ENCODE measurements at regions of chr17 and their contacts with region 1.

Region 1: DNA sequence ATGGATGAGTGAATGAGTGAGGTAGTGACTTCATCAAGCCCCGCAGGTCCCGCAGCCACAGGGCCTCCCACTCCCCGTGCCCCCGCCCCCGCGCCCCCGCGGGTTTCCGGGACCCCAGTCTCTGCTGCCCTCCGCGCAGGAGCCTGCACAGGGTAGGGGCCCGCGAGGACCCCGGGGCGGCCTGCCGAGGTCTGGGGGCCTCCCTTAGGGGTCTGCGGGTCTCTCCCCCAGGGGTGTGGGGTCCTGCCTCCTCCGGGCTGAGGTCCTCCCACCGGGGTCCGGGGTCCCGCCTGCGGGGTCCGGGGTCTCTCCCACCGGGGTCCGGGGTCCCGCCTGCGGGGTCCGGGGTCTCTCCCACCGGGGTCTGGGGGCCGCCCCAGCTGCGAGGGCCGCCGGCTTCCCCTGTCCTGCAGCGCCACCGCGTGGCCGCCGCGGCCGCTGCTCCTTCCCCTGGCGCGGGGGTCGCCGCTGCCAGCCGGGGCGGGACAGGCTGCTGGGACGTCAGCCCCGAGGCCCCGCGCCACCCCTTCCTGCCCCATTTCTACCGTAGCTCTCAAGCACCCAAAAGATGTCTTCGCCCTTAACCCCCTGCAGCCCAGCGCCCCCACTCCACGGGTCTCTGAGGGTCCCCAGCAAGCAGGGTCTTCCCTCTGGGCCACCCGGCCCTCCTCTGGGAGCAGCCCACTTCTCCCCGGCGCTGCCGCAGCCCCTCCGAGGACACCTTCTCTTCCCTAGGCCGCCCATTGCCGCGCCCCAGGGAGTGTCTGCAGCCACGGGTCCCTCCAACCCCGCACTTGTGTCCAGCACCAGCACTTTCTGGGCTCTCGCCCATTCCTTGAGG is 10.4 kb upstream of the CHMP6 start:
- DNase-seq: no peak
- H3K4me3 ChIP-seq: peak overlapping the region in 1 of 2 donors; percentile 16
- H3K27ac ChIP-seq: no peak overlapping the region
- H3K4me1 ChIP-seq: peaks cover 0 to 28% (median 12%) of the 10 kb centered on the region in 4 donors
- H3K27me3 ChIP-seq: peaks cover 0 to 5% of the 10 kb centered on the region in 2 donors
- CTCF ChIP-seq: peak; percentile 77 to 78

Region 2: GRCh38 chr17:80426681-80427326 is 554.5 kb before region 1 on chr17:
- intact Hi-C with region 1: loop called (anchors 2 kb)
- DNase-seq: peak; percentile 61 to 77
- H3K4me3 ChIP-seq: no peak overlapping the region
- H3K27ac ChIP-seq: no peak overlapping the region
- H3K4me1 ChIP-seq: peaks cover 0 to 14% (median 4%) of the 10 kb centered on the region in 4 donors
- H3K27me3 ChIP-seq: no peaks in the 10 kb centered on the region
- CTCF ChIP-seq: peak; percentile 97 to 98

Region 3: GRCh38 chr17:80432961-80433550 is 548.2 kb before region 1 on chr17:
- intact Hi-C with region 1: loop called (anchors 2 kb)
- DNase-seq: no peak
- H3K4me3 ChIP-seq: no peak overlapping the region
- H3K27ac ChIP-seq: no peak overlapping the region
- H3K4me1 ChIP-seq: no peaks in the 10 kb centered on the region
- H3K27me3 ChIP-seq: no peaks in the 10 kb centered on the region
- CTCF ChIP-seq: no peak

Region 4: DNA sequence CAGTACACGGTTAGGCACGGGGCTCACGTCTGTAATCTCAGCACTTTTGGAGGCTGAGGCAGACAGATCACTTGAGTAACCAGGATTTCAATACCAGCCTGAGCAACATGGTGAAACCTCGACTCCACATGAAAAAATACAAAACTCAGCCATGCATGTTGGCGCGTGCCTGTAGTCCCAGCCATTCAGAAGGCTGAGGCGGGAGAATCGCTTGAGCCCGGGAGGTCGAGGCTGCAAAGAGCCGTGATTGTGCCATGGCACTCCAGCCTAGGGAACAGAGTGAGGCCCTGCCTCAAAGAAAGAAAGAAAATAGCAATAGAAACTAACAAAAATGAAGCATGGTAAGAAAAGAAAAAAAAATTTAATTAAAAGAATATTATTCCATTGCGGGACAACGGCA is 117.7 kb before region 1 on chr17:
- intact Hi-C with region 1: loop called (anchors 2 kb)
- DNase-seq: no peak
- H3K4me3 ChIP-seq: no peak overlapping the region
- H3K27ac ChIP-seq: no peak overlapping the region
- H3K4me1 ChIP-seq: peaks cover 0 to 13% (median 10%) of the 10 kb centered on the region in 4 donors
- H3K27me3 ChIP-seq: no peaks in the 10 kb centered on the region
- CTCF ChIP-seq: no peak

Region 5: DNA sequence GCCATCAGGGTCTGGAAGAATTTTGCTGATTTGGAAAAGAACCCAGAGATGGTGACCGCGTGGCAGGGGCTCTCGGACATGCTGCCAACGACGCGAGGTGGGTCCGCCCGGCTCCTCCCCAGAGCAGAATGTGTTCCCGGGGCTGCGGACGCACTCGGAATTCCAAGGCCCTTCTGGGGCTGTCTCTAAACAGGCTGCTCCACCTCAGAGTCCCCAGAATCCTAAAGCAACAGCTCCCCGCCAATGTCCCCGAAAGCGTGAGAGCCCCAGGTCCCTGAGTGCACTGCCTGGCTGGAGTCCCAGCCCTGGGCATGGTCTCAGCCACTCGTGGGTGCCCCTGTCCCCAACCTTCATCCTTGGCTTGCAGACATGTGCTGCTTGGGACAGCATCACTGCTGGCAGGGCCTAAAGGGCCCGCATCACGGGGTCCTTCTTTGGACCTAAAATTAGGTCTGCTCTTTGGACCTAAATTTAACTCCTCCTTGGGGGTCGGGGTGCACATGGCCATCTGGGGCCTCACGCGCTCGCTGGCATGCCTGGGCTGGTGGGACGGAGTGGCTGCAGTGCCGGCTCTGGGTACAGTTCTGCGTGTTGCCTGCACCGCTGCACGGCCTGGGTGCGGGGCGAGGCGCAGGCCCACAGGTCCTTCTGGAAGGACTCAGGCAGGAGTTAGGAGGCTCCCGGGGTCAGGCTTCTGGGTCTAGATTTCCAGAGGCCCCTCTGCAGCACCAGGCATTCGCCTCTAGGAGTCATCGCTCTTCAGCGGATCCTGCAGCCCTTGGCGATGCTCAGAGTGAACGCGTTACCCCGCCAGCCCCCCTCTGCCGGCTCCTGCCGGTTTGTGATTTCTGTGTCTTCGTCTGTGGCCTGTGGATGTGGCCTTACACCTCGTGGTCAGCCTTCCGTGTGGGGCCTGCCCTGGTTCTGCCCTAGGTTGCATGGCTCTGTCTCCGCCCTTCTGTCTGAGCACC is 31.5 kb before region 1 on chr17:
- intact Hi-C with region 1: no loop called
- DNase-seq: peak in 1 of 2 donors; percentile 85
- H3K4me3 ChIP-seq: peak overlapping the region in 1 of 2 donors; percentile 5
- H3K27ac ChIP-seq: peak overlapping the region; percentile 70 to 81
- H3K4me1 ChIP-seq: peaks cover 0 to 33% (median 25%) of the 10 kb centered on the region in 4 donors
- H3K27me3 ChIP-seq: no peaks in the 10 kb centered on the region
- CTCF ChIP-seq: peak in 1 of 2 experiments; percentile 29